Posterior vena cava (tissue), 2 donors: ENCODE measurements at regions of chr12 and their contacts with region 1.

Region 1: GRCh38 chr12:106480251-106480650 is 102.6 kb upstream of the RFX4 start:
- DNase-seq: no peak

Region 2: DNA sequence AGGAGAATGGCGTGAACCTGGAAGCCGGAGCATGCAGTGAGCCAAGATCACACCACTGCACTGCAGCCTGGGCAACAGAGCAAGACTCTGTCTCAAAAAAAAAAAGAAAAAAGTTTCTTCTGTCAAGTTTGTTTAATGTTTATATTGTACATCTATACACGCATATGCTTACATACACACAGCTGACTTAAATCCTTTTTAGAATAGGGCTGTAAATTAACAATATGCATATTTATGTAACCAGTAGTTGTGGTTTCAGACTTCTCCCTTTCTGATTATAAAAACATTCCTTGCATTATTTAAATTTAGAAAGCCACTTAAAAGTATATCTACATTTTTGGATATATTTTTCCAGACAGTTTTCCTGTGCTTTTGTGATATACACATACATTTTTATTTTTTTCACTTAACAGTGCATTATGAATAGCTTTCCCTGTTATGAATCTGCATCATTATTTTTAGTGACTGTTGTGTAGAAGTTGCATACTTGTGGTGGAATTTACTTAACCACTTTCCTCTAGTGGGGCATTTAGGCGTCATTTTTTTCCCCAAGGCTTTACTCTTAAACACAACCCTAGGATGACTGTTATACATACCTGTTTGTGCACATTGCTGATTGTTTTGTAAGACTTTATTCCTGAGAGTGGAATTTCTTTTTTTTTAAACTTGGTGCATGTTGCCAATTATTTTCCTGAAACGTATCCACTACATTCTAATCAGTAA is 93.3 kb before region 1 on chr12:
- intact Hi-C with region 1: no loop called
- DNase-seq: no peak

Region 3: DNA sequence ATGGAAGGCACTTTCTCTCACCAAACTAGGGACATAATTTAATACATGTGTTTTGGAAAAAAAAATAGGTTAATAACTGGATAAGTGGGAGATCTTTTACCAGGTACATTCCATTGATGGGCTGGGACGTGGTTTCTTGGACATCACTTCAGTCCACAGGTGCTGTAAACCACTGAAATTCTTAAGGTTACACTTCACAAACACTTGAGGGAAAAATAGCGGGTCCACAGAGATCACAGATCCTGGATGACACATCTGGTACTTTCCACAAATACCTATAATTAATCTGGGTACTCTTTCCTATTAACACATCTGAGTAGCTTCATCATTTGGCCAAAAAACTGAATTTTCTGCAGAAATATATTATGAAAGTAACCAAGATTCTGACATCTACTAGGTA is 37.7 kb before region 1 on chr12:
- intact Hi-C with region 1: loop called in 1 of 2 experiments (anchors 2 kb)
- DNase-seq: no peak

Region 4: GRCh38 chr12:106493531-106493930 is 13.3 kb after region 1 on chr12:
- intact Hi-C with region 1: loop called in 1 of 2 experiments (anchors 1 kb)
- DNase-seq: no peak